Activated CD8-positive, alpha-beta T cell treated with anti-CD3 and anti-CD28 coated beads for 36 hours (primary cell): ENCODE measurements at regions of chr3 and their contacts with region 1.

Region 1: DNA sequence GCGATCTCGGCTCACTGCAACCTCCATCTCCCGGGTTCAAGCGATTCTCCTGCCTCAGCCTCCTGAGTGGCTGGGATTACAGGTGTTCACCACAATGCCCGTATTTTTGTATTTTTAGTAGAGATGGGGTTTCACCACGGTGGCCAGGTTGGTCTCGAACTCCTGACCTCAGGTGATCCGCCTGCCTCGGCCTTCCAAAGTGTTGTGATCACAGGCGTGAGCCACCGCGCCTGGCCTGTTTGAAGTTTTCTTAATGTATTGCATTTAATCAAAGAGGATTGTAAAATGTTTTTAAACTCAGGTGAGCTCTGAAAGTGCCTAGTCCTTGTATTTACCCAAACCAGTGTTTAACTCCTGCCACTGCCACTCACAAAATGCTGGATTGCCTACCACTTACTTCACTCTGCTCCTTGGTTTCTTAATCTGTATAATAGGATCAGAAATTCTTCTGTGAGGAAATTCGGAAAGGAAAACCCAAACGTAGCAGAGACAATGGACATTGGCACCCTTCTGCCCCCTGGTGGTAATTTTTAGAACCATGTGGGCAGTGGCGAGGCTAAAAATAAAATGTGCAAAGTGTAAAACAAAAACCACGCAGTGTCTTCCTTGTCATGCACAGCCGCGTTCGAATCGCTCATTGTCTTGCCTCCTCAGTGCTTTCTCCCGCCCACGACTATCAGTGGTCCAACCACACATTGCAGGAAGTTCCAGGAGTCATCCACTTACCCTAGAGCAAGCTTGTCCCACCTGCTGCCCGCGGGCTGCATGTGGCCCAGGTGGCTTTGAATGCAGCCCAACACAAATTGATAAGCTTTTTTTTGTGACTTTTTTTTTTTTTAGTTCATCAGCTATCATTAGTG is 27.3 kb downstream of the CEP19 start:
- DNase-seq: peak; percentile 88
- ATAC-seq: peak; percentile 94
- H3K4me3 Mint-ChIP-seq: peak overlapping the region; percentile 24
- H3K27ac Mint-ChIP-seq: peak overlapping the region; percentile 79
- H3K4me1 Mint-ChIP-seq: peaks cover 14% of the 10 kb centered on the region
- H3K27me3 Mint-ChIP-seq: no peaks in the 10 kb centered on the region
- CTCF ChIP-seq: peak; percentile 93

Region 2: DNA sequence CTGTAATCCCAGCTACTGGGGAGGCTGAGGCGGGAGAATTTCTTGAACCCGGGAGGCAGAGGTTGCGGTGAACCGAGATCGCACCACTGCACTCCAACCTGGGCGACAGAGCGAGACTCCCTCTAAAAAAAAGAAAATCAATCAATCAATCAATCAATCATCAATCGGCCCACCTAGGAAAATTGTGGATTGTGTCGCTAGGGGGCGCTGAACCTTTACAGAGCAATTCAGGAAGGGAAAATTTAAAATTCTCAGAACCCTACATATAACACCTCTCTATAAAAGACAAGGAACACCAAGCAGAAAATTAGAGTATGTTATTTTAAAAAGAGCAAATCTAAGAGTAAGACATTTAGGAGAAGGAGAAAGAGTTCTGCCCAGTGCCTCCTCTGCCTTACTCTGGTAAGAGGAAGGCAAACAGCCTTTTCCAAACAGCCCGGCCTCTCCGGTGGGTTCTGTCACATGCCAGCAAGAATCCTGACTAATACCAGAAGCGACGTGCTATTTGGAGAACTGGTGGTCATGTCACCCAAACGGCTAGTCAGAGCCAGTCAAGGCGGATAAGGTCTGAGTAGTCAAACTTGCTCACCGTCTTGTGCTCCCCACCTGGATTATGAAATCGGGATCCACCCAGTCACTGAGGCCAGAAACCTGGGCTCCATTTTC is 147.3 kb before region 1 on chr3:
- CTCF ChIA-PET with region 1: interaction called, 9 read pairs
- POLR2A ChIA-PET with region 1: no interaction called
- intact Hi-C with region 1: loop called (anchors 10 kb)
- DNase-seq: peak; percentile 80
- ATAC-seq: no peak
- H3K4me3 Mint-ChIP-seq: no peak overlapping the region
- H3K27ac Mint-ChIP-seq: no peak overlapping the region
- H3K4me1 Mint-ChIP-seq: no peaks in the 10 kb centered on the region
- H3K27me3 Mint-ChIP-seq: peaks cover 1% of the 10 kb centered on the region
- CTCF ChIP-seq: peak; percentile 86

Region 3: DNA sequence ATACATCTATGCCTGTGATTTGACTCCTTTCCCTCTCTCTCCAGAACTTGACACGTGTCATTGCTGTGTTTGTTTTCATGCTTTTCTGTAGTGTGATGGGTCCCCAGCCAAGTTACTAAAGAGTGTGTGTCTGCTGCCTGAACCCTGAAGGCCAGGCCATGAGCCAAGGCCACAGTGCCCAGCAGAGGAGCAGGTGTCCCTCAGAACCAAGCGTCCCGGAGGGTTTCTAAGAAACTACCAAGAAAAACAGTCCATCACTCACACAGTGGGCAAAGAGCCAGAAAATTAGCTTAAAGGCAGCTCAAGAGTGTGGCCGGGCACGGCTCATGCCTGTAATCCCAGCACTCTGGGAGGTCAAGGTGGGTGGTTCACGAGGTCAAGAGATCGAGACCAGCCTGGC is 81.1 kb before region 1 on chr3:
- CTCF ChIA-PET with region 1: interaction called, 310 read pairs
- POLR2A ChIA-PET with region 1: interaction called, 11 read pairs
- intact Hi-C with region 1: loop called (anchors 2 kb)
- DNase-seq: no peak
- ATAC-seq: no peak
- H3K4me3 Mint-ChIP-seq: no peak overlapping the region
- H3K27ac Mint-ChIP-seq: no peak overlapping the region
- H3K4me1 Mint-ChIP-seq: peaks cover 10% of the 10 kb centered on the region
- H3K27me3 Mint-ChIP-seq: no peaks in the 10 kb centered on the region
- CTCF ChIP-seq: no peak

Region 4: DNA sequence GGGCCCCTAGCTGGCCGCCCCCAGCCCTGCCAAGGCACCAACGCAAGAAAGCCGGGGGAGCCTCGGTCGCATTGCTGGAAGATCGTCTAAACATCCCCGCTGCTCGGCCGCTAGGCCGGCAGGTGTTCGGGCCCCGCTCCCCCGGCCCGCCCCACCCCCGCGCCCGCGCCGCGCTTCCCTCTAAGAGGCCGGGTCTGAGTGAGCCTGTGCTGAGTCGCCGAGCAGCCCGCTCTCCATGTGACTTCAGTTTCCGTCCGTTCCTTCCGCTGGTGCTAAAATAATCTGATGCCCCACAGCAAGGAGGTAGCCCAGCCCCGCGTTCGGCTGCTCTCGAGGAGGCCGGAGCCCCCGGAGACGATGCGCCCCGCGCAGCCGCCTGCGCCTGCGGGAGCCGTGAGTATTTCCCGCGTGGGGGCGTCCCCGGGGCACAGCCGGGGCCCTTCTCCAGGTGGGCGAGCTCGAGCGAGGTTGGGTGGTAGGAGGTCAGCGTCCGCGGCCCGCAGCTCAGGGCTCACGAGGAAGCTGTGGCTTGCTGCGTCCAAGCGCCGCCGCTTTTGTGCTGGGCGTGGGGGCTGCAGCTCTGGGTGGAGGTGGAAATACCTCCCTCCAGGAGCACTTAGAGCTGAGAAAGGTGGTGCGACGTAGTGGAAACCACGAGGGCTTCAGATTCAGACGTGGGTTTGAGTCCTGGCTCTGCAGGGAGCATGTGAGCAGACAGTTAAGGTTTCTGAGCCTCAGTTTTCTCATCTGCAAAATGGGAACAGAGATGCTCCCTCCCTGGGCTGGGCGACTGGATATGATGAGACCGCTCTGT is 45.1 kb before region 1 on chr3 and contains the start of gene NRROS:
- CTCF ChIA-PET with region 1: interaction called, 19 read pairs
- POLR2A ChIA-PET with region 1: no interaction called
- intact Hi-C with region 1: no loop called
- DNase-seq: peak; percentile 85
- ATAC-seq: peak; percentile 76
- H3K4me3 Mint-ChIP-seq: peak within 1 kb of the TSS; percentile 86
- H3K27ac Mint-ChIP-seq: peak within 1 kb of the TSS; percentile 90
- H3K4me1 Mint-ChIP-seq: peaks cover 51% of the 10 kb centered on the region
- H3K27me3 Mint-ChIP-seq: no peaks in the 10 kb centered on the region
- CTCF ChIP-seq: no peak
- total RNA-seq, gene NRROS: 24.2 to 26.5 TPM

Region 5: DNA sequence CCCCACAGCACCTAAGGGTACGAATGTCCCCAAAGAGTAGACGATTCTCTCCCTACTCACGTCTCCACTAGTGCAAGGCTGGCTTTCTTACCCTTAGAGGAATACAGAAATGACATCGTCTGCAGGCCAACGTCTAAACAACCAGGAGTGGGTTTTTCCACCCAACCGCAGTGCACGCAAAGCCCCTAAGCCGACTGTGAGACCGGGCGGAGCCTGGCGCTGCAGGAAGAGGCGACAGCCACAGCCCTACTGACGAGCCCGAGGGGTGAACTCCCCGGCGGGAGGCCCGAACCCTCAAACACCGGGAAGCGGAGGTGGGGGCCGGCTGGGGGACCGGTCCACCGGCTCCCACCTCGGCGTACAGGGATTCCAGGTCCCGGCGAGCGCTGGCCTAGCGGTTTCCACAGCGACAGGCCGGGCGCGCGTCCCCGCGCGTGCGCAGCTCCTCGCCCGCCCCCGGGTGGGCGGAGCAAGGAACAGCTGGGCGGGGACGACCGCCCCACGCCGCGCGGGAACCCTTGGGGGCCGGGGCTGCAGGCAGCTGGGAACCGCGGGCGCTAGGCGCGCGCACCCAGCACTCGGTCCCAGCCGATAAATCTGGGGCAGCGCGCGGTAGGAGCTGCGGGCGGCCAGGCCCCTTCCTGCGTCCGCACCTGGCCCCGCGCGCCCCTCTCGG is 27.2 kb after region 1 on chr3 and contains the starts of genes CEP19 and PIGX:
- CTCF ChIA-PET with region 1: interaction called, 12 read pairs
- POLR2A ChIA-PET with region 1: interaction called, 4 read pairs
- intact Hi-C with region 1: no loop called
- DNase-seq: peak; percentile 96
- ATAC-seq: peak; percentile 84
- H3K4me3 Mint-ChIP-seq: peak within 1 kb of the TSS; percentile 81
- H3K27ac Mint-ChIP-seq: peak within 1 kb of the TSS; percentile 93
- H3K4me1 Mint-ChIP-seq: peaks cover 36% of the 10 kb centered on the region
- H3K27me3 Mint-ChIP-seq: no peaks in the 10 kb centered on the region
- CTCF ChIP-seq: no peak
- total RNA-seq, gene CEP19: 5.2 to 5.5 TPM
- total RNA-seq, gene PIGX: 43.7 to 47.1 TPM